ENCODE measurements at regions of chr1 and their contacts with region 1.

Region 1: GRCh38 chr1:235783148-235783776 is 83.4 kb downstream of the LYST start:
- DNase-seq: peak; percentile 52
- H3K4me3 ChIP-seq: no peak overlapping the region
- H3K27ac ChIP-seq: no peak overlapping the region
- H3K4me1 ChIP-seq: no peaks in the 10 kb centered on the region
- H3K27me3 ChIP-seq: no peaks in the 10 kb centered on the region
- CTCF ChIP-seq: peak in 1 of 2 donors; percentile 13
- POLR2A ChIP-seq: no peak

Region 2: GRCh38 chr1:235513495-235514366 is 269.5 kb before region 1 on chr1:
- CTCF ChIA-PET with region 1: interaction called, 37 read pairs
- POLR2A ChIA-PET with region 1: no interaction called
- dilution Hi-C with region 1: no loop called
- intact Hi-C with region 1: loop called (anchors 1 kb)
- DNase-seq: peak; percentile 72
- H3K4me3 ChIP-seq: no peak overlapping the region
- H3K27ac ChIP-seq: no peak overlapping the region
- H3K4me1 ChIP-seq: no peaks in the 10 kb centered on the region
- H3K27me3 ChIP-seq: no peaks in the 10 kb centered on the region
- CTCF ChIP-seq: peak; percentile 68 to 74
- POLR2A ChIP-seq: no peak

Region 3: DNA sequence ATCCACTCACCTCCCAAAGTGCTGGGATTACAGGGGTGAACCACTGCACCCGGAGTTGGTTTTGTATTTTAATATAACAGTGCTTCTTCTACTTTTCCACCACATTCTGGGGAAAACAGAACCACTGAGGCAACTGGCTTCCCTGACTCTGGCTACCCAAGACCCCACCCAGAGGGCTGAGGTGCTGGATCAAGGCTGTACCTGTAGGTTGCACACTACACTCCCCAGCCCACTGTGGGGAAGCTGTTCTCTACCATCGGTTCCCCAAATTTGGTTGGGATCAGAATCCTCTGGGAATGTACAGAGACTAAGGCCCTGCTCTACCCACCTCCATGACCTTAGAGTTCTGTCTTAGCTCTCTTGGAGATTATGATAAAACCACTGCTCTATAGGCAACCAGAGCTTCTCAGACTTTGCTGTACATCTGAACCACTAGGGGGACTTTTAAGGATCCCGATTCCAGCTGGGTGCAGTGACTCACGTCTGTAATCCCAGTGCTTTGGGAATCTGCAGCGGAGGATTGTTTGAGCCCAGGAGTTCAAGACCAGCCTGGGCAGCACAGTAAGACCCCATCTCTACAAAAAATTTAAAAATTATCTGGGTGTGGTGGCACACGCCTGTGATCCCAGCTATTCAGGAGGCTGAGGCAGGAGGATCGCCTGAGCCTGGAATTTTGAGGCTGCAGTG is 185.3 kb before region 1 on chr1:
- CTCF ChIA-PET with region 1: interaction called, 55 read pairs
- POLR2A ChIA-PET with region 1: no interaction called
- dilution Hi-C with region 1: no loop called
- intact Hi-C with region 1: loop called (anchors 1 kb)
- DNase-seq: peak; percentile 18
- H3K4me3 ChIP-seq: no peak overlapping the region
- H3K27ac ChIP-seq: no peak overlapping the region
- H3K4me1 ChIP-seq: no peaks in the 10 kb centered on the region
- H3K27me3 ChIP-seq: no peaks in the 10 kb centered on the region
- CTCF ChIP-seq: peak; percentile 28 to 36
- POLR2A ChIP-seq: no peak

Region 4: DNA sequence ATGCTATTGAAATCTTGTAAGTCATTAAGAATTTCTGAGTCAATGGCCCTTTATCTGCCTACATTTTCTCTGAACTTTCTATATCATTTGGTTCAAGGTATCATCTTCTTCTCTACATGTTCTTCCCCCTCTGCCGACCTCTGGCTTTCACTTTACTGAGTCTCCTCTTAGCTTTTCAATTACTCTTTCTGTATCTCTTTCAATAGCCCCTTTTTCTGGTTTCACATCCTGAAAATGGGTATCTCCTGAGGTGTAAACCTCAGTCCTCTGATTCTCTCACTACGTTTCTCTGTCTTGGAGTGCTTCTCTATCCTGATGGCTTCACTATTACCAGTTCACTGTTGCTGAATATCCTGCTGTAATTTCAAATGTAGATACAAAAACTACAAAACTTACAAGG is 15.5 kb before region 1 on chr1:
- CTCF ChIA-PET with region 1: interaction called, 14 read pairs
- POLR2A ChIA-PET with region 1: no interaction called
- dilution Hi-C with region 1: no loop called
- intact Hi-C with region 1: no loop called
- DNase-seq: no peak
- H3K4me3 ChIP-seq: no peak overlapping the region
- H3K27ac ChIP-seq: no peak overlapping the region
- H3K4me1 ChIP-seq: no peaks in the 10 kb centered on the region
- H3K27me3 ChIP-seq: no peaks in the 10 kb centered on the region
- CTCF ChIP-seq: no peak
- POLR2A ChIP-seq: no peak